Heart left ventricle (tissue), 16 donors: ENCODE measurements at regions of chr9 and their contacts with region 1.

Region 1: GRCh38 chr9:71295928-71296327 is 174.5 kb upstream of the TRPM3 start:
- DNase-seq: no peak
- ATAC-seq: no peak
- H3K4me3 ChIP-seq: no peak overlapping the region
- H3K27ac ChIP-seq: no peak overlapping the region
- H3K4me1 ChIP-seq: no peaks in the 10 kb centered on the region
- H3K27me3 ChIP-seq: no peaks in the 10 kb centered on the region
- CTCF ChIP-seq: no peak
- POLR2A ChIP-seq: no peak

Region 2: GRCh38 chr9:71333321-71333720 is 37.4 kb after region 1 on chr9:
- intact Hi-C with region 1: loop called in 1 of 10 experiments (anchors 2 kb)
- DNase-seq: no peak
- ATAC-seq: no peak
- H3K4me3 ChIP-seq: no peak overlapping the region
- H3K27ac ChIP-seq: no peak overlapping the region
- H3K4me1 ChIP-seq: no peaks in the 10 kb centered on the region
- H3K27me3 ChIP-seq: peaks cover 0 to 7% (median 0%) of the 10 kb centered on the region in 9 donors
- CTCF ChIP-seq: no peak
- POLR2A ChIP-seq: no peak